Mammary epithelial cell (primary cell): ENCODE measurements at regions of chr10 and their contacts with region 1.

Region 1: DNA sequence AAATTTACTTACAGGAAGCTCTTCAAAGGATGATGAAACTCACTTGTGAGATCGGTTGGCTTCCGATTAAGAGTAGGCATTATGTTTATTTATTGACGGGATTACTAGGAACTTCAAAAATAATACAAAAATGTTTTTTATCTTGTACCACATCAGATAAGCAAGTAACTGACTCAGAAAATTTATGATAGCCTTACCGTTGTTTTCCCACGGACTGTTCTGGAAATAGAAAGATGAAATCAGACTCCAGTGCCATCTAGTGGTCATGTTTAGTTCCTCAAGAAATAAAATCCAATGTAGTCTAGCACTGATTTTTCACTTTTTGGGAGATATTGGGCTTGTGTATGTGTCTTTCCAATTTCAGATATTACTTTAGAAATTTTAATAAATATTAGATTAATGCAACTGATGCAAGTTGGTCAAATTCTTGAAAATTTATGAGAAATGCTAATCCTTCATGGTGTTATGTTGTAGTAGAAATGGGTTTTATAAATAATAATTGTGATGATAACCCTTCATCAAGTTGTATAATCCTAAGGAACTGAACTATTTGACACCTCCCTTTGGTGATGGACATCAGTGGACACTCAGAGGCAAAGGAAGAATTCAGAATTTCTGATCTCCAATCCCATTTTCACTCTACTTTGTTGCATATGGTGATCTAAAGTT is 168.8 kb downstream of the TMEM26 start:
- DNase-seq: peak; percentile 22
- H3K4me3 ChIP-seq: no peak overlapping the region
- H3K27ac ChIP-seq: no peak overlapping the region
- H3K4me1 ChIP-seq: no peaks in the 10 kb centered on the region
- H3K27me3 ChIP-seq: no peaks in the 10 kb centered on the region
- CTCF ChIP-seq: peak; percentile 66 to 70

Region 2: DNA sequence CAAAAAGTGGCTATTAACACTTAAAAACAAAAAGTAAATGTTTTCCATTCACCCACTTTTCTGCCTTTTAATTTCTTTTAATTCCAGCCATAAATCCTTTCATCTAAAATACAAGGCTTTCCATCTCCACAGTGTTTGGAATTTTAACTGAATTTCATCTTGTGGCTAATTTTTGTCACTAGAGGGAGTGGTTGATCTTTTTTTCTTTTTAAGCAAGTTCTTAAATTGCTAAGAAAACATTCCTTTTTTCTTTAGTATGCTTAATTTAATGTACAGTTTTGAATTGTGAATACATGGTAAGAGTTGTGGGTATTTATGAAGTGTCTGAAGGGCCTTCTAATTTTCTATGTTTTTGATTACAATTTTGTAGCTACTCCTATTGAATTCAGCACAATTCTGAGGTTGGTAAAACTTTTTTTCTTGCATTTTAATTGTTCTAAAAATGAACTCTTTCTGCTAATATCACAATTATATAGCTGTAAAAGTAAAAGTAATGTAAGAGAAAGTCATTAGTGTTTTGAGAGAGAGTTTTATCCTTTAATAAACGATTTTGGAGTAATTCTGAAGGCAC is 839.8 kb before region 1 on chr10:
- CTCF ChIA-PET with region 1: no interaction called
- dilution Hi-C with region 1: no loop called
- in situ Hi-C with region 1: no loop called
- intact Hi-C with region 1: loop called (anchors 5 kb)
- DNase-seq: no peak
- H3K4me3 ChIP-seq: no peak overlapping the region
- H3K27ac ChIP-seq: no peak overlapping the region
- H3K4me1 ChIP-seq: peaks cover 25% of the 10 kb centered on the region
- H3K27me3 ChIP-seq: no peaks in the 10 kb centered on the region
- CTCF ChIP-seq: peak; percentile 47 to 54

Region 3: DNA sequence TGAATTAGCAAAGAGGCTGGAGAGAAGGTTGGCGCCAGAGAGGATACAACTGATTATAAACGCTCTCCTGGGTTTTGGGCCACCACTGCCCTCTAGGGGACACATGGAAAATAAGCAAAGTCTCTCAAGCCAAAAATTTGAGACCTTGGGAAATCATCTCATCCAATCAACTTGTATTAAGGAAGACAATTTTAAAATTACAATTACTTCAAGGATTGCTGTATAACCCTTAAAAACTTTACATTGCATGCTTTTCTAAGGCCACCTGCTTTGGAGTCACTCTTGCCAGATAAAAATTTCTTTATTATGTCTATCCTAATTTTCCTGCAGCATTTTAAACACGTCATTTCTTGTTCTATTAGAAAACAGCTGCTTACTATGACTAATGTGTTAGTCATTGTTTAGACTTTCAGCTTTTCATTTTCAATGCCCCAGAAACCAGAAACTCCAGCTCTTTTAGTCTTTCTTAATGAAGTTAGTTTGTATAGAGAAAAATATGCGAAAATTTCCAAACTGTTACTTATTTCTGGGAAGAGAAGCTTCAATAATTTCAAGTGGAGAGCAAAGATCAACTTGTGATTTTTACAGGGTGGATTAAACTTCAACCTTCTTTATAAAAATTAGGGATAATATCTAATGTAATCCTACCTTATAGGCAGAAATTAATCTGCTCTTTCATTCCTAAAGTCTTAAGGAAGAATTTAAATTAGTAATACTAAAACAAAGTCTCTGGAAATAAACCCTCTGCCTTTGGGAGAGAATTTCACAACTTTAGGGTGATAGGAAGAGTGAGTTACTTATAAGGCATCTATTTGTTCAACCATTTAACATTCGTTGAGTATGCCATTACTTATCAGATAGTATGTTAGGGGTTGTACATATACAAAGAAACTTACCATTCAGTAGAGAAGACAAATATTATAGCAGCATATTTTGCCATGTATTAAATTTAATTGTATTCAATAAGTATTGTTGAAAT is 319.8 kb before region 1 on chr10:
- CTCF ChIA-PET with region 1: no interaction called
- dilution Hi-C with region 1: no loop called
- in situ Hi-C with region 1: no loop called
- intact Hi-C with region 1: loop called (anchors 5 kb)
- DNase-seq: peak; percentile 82
- H3K4me3 ChIP-seq: peak overlapping the region in 1 of 3 experiments; percentile 26
- H3K27ac ChIP-seq: peak overlapping the region; percentile 86
- H3K4me1 ChIP-seq: peaks cover 26% of the 10 kb centered on the region
- H3K27me3 ChIP-seq: no peaks in the 10 kb centered on the region
- CTCF ChIP-seq: peak; percentile 73 to 87

Region 4: GRCh38 chr10:61130366-61130765 is 154.0 kb before region 1 on chr10:
- CTCF ChIA-PET with region 1: no interaction called
- dilution Hi-C with region 1: no loop called
- in situ Hi-C with region 1: no loop called
- intact Hi-C with region 1: no loop called
- DNase-seq: no peak
- H3K4me3 ChIP-seq: no peak overlapping the region
- H3K27ac ChIP-seq: no peak overlapping the region
- H3K4me1 ChIP-seq: no peaks in the 10 kb centered on the region
- H3K27me3 ChIP-seq: no peaks in the 10 kb centered on the region
- CTCF ChIP-seq: no peak

Region 5: GRCh38 chr10:61140765-61141392 is 143.5 kb before region 1 on chr10:
- CTCF ChIA-PET with region 1: no interaction called
- dilution Hi-C with region 1: no loop called
- in situ Hi-C with region 1: no loop called
- intact Hi-C with region 1: loop called (anchors 2 kb)
- DNase-seq: peak; percentile 41
- H3K4me3 ChIP-seq: no peak overlapping the region
- H3K27ac ChIP-seq: no peak overlapping the region
- H3K4me1 ChIP-seq: no peaks in the 10 kb centered on the region
- H3K27me3 ChIP-seq: no peaks in the 10 kb centered on the region
- CTCF ChIP-seq: peak; percentile 59 to 61

Region 6: DNA sequence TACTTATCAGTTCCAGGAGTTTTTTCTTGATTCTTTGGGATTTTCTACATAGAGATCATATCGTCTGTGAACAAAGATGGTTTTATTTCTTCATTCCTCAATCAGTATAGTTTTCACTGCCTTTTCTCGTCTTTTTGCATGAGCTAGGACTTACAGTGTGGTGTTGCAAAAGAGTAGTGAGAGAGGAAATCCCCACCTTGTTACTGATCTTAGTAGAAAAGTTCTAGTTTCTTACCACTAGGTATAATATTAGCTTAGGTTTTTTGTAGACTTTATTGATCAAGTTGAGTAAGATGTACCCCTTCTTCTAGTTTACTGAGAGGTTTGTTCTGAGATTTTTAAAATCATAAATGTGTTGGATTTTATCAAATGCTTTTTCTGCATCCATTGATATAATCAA is 45.5 kb after region 1 on chr10:
- CTCF ChIA-PET with region 1: no interaction called
- dilution Hi-C with region 1: no loop called
- in situ Hi-C with region 1: no loop called
- intact Hi-C with region 1: no loop called
- DNase-seq: no peak
- H3K4me3 ChIP-seq: no peak overlapping the region
- H3K27ac ChIP-seq: no peak overlapping the region
- H3K4me1 ChIP-seq: no peaks in the 10 kb centered on the region
- H3K27me3 ChIP-seq: peaks cover 3% of the 10 kb centered on the region
- CTCF ChIP-seq: no peak

Region 7: DNA sequence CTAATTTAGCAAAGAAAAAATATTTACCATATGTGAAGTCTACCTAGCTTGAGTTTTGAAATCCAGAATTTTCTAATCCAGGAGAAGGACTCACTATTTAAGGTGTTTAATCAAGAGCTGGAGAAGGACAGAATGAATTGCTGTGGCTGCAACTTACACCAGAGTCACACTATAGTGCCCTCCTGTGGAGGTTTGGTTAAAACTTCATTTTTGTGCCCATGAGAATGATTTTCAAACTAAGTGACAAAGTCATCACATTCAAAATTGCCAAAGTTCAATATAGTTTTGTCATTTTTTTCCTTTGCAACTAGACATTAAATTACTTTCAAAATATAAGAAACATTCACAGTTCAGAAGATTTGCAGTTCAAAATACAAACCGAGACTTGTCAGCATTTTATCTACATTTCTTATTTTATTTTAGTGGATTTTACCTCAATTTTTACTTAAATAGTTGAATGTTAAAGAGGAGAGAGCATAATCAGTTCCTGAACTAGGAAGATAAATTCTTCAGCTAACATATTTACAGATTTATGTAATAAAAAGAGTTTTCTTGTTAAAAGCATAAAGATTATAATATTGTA is 449.1 kb after region 1 on chr10:
- CTCF ChIA-PET with region 1: no interaction called
- dilution Hi-C with region 1: no loop called
- in situ Hi-C with region 1: no loop called
- intact Hi-C with region 1: loop called (anchors 5 kb)
- DNase-seq: peak; percentile 19
- H3K4me3 ChIP-seq: no peak overlapping the region
- H3K27ac ChIP-seq: no peak overlapping the region
- H3K4me1 ChIP-seq: no peaks in the 10 kb centered on the region
- H3K27me3 ChIP-seq: peaks cover 2% of the 10 kb centered on the region
- CTCF ChIP-seq: peak; percentile 55 to 65